Aorta (tissue), 5 donors: ENCODE measurements at regions of chr12 and their contacts with region 1.

Region 1: GRCh38 chr12:6278439-6279255 is 31.8 kb upstream of the PLEKHG6 start:
- DNase-seq: peak; percentile 92 to 96
- ATAC-seq: peak; percentile 93
- H3K4me3 ChIP-seq: peak overlapping the region in 1 of 2 donors; percentile 59
- H3K27ac ChIP-seq: peak overlapping the region in 1 of 2 donors; percentile 34
- H3K4me1 ChIP-seq: no peaks in the 10 kb centered on the region
- H3K27me3 ChIP-seq: no peaks in the 10 kb centered on the region

Region 2: DNA sequence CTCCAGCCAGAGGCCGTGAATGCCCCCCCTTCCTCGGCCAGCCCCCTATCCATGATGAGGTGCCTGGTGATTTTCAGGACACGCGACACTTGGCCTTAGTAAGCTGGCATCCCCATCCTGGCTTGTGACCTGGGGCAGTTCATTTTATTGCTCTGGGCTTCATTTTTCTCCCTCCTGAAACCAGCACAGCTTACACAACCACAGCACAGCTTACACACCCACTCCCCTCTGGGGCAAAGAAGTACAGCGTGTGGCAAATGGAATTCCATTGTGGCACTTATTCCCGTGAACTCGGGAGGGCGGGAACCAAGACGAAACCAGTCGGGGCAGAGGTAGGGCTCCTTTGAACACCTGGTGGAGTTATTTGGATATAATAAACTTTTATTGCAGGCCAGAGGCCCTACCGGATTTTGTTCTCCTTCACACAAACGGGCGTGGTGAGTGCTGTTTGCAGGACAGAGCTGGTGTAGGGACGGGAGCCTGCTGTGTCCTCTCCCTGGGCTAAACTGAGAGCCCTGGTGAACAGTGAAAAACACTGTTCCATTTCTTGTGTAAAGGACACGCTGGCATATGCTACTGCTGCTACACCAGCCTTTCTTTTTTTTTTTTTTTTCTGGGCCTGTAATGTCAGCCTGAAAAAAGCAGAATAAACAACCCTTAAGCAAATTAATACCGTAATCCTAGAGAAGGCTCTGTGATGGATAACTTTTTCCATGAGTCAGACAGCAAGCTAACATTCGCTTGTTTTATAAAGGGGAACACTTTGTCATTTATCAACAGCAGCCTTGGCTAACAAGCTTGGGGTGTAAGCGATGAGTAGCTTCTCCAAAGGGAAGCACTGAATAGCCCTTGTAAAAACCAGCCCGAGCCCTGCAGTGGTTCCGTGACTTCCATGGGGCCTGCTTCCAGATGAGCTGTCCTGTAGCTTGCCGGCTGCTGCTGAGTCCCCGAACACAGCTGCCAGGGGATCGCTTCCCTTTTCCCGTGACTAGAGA is 49.1 kb before region 1 on chr12:
- intact Hi-C with region 1: loop called (anchors 2 kb)
- DNase-seq: peak; percentile 88 to 91
- ATAC-seq: peak; percentile 67
- H3K4me3 ChIP-seq: no peak overlapping the region
- H3K27ac ChIP-seq: peak overlapping the region; percentile 95 to 98
- H3K4me1 ChIP-seq: peaks cover 3 to 10% of the 10 kb centered on the region in 2 donors
- H3K27me3 ChIP-seq: no peaks in the 10 kb centered on the region